HepG2 (cell line): ENCODE measurements at regions of chr6 and their contacts with region 1.

Region 1: GRCh38 chr6:25556516-25556915 is 95.5 kb upstream of the SCGN start:
- DNase-seq: peak; percentile 65
- ATAC-seq: peak; percentile 81
- H3K4me3 ChIP-seq: no peak overlapping the region
- H3K27ac ChIP-seq: no peak overlapping the region
- H3K4me1 ChIP-seq: no peaks in the 10 kb centered on the region
- H3K27me3 ChIP-seq: no peaks in the 10 kb centered on the region
- CTCF ChIP-seq: peak; percentile 88
- EP300 ChIP-seq: no peak
- POLR2A ChIP-seq: no peak
- RAD21 ChIP-seq: no peak

Region 2: DNA sequence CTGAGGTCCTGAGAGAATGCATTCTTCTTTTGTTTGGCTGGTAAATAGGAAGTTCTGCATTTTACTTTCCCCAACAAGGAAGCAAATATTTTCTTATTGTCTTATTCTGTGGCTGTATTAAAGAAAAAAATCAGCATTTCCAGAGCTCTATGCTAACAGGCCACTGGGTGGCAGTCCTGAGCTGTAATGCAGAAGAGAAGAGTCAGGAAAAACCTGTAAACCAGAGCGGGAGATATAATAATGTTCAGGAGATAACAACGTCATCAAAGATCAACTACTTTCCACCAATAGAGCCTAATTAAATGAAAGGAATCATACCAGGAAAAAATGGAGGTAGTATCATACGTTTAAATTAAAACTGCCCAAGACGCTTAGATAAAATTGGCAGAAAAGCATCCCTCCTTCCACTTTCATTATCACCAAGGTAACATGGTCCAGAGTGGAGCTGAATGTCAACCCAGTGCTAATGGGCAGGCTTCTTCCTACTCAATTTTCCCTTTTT is 333.0 kb before region 1 on chr6:
- CTCF ChIA-PET with region 1: interaction called, 18 read pairs
- POLR2A ChIA-PET with region 1: no interaction called
- in situ Hi-C with region 1: no loop called
- intact Hi-C with region 1: loop called (anchors 1 kb)
- DNase-seq: peak; percentile 54
- ATAC-seq: peak; percentile 73
- H3K4me3 ChIP-seq: no peak overlapping the region
- H3K27ac ChIP-seq: no peak overlapping the region
- H3K4me1 ChIP-seq: no peaks in the 10 kb centered on the region
- H3K27me3 ChIP-seq: 0 out of 5 replicates have a peak, but pooled peaks cover 0 to 4% of the 10 kb centered on the region in 2 experiments
- CTCF ChIP-seq: peak; percentile 84
- EP300 ChIP-seq: no peak
- POLR2A ChIP-seq: no peak
- RAD21 ChIP-seq: peak; percentile 57; the same call in 1 of the 2 replicates

Region 3: GRCh38 chr6:25263657-25264056 is 292.9 kb before region 1 on chr6:
- CTCF ChIA-PET with region 1: interaction called, 5 read pairs
- POLR2A ChIA-PET with region 1: no interaction called
- in situ Hi-C with region 1: no loop called
- intact Hi-C with region 1: loop called (anchors 1 kb)
- DNase-seq: no peak
- ATAC-seq: no peak
- H3K4me3 ChIP-seq: no peak overlapping the region
- H3K27ac ChIP-seq: no peak overlapping the region
- H3K4me1 ChIP-seq: no peaks in the 10 kb centered on the region
- H3K27me3 ChIP-seq: no peaks in the 10 kb centered on the region
- CTCF ChIP-seq: no peak
- EP300 ChIP-seq: no peak
- POLR2A ChIP-seq: no peak
- RAD21 ChIP-seq: no peak

Region 4: DNA sequence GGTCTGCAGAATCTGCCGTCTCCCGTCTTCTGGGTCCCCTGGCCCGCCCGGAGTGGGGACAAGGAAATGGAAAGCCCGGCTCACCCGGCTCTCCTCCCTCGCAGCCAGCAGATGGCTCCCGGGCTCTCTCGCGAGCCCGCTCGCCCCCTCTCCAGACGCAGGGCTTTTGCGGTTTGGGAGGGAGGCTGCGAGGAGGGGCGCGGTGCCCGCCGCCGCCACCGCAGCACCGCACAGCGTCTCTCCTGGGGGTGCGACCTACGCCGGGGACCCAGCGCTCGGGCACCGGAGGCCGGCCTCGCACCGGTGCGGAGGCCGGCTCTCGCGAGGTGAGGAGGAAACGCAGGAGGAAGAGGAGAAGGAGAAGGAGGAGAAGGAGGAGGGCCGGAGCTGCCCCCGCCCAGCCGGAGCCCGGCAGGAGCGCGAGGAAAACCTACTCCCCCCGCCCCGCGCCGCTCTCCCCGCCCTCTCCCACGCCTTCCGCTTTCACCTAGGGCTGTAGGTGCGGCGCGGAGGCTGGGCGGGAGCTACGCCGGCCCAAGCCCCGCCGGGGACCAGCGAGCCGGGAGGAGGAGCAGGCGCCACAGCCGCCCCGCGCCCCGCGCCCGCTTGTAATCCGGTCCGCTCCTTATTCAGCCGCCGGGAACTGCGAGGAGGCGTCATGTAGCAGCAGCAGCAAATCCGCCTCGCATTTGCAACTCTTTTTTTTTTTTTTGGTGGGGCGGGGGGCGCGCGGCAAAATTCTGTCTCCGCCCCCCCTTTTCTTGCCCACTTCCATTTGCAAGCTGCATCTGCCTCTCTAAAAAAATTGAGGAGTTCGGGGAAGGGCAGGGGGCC is 277.4 kb before region 1 on chr6 and contains the start of gene CARMIL1:
- CTCF ChIA-PET with region 1: no interaction called
- POLR2A ChIA-PET with region 1: no interaction called
- in situ Hi-C with region 1: no loop called
- intact Hi-C with region 1: loop called (anchors 1 kb)
- DNase-seq: peak; percentile 54
- ATAC-seq: peak; percentile 92
- H3K4me3 ChIP-seq: peak within 1 kb of the TSS; percentile 67 to 81 (median 79)
- H3K27ac ChIP-seq: no peak within 1 kb of the TSS
- H3K4me1 ChIP-seq: peaks cover 35% of the 10 kb centered on the region
- H3K27me3 ChIP-seq: peaks cover 0 to 21% of the 10 kb centered on the region in 2 experiments; a peak in 3 of 5 replicates
- CTCF ChIP-seq: peak; percentile 86
- EP300 ChIP-seq: no peak
- POLR2A ChIP-seq: no peak
- RAD21 ChIP-seq: peak; percentile 91
- total RNA-seq, gene CARMIL1: 2.6 and 2.9 TPM in 2 replicates

Region 5: DNA sequence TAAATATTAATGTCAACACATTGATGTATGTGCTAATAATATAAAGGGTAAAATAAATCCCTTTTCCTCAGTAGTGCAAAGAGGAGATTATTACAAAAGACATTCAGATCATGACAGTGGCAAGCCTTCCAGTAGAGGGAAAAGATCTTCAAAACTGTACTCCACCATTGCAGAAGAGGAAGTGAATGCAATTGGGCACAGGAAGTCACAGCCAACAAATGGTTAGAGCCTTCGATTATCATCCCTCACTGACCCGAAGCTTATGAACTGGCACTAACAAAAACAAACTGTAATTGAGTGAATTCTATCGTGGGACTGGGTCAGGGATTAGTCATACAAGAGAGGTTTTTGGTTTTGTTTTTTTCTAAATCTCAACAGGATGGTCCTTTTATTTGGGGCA is 56.1 kb after region 1 on chr6:
- CTCF ChIA-PET with region 1: no interaction called
- POLR2A ChIA-PET with region 1: no interaction called
- in situ Hi-C with region 1: no loop called
- intact Hi-C with region 1: no loop called
- DNase-seq: no peak
- ATAC-seq: no peak
- H3K4me3 ChIP-seq: no peak overlapping the region
- H3K27ac ChIP-seq: no peak overlapping the region
- H3K4me1 ChIP-seq: no peaks in the 10 kb centered on the region
- H3K27me3 ChIP-seq: no peaks in the 10 kb centered on the region
- CTCF ChIP-seq: no peak
- EP300 ChIP-seq: no peak
- POLR2A ChIP-seq: no peak
- RAD21 ChIP-seq: no peak